Common myeloid progenitor, CD34-positive (primary cell): ENCODE measurements at regions of chr17 and their contacts with region 1.

Region 1: GRCh38 chr17:82559566-82560251 is 40.2 kb downstream of the FOXK2 start:
- DNase-seq: peak in 2 of 3 donors; percentile 32 to 33
- H3K4me3 ChIP-seq: no peak overlapping the region
- H3K27ac ChIP-seq: no peak overlapping the region
- H3K4me1 ChIP-seq: peaks cover 0 to 15% (median 10%) of the 10 kb centered on the region in 4 experiments
- H3K27me3 ChIP-seq: no peaks in the 10 kb centered on the region

Region 2: DNA sequence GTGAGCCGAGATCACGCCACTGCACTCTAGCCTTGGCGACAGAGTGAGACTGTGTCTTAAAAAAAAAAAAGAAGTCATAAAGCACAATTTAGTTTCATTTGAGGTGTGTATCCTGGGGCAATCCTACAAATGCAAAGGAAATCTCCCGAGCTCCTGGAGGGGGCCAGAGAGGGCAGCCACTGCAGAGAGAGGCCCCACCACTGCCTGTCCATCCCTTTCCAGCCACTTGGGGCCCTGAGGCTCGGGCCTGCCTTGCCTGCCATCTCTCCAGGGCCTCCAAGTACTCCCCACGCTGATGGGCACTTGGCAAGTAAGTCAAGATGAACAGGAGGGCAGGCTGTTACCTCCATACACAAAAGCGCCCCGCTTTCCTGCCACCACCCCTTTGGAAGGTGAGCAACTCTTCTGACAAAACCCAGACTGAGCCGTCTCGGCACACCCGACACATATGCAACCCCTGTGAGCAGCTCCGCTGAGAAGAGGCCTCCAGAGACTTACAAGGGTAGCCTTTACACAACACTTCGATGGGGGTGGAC is 307.7 kb before region 1 on chr17:
- CTCF ChIA-PET with region 1: no interaction called
- POLR2A ChIA-PET with region 1: interaction called, 12 read pairs
- DNase-seq: no peak
- H3K4me3 ChIP-seq: no peak overlapping the region
- H3K27ac ChIP-seq: no peak overlapping the region
- H3K4me1 ChIP-seq: peaks cover 0 to 14% (median 9%) of the 10 kb centered on the region in 4 experiments
- H3K27me3 ChIP-seq: no peaks in the 10 kb centered on the region

Region 3: DNA sequence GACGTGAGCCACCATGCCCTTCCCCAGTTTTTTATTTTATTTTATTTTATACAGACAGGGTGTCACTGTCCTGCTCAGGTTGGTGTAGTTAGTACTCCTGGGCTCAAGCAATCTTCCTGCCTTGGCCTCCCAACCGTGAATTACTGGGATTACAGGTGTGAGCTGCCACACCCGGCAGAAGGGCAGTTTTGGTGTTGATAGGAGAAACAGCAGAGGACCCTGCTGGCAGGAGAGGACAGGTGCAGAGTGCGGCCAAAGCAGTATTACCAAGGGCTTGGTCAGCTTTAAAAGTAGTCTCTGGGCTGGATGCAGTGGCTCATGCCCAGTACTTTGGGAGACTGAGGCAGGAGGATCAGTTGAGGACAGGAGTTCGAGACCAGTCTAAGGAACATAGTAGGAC is 17.3 kb before region 1 on chr17:
- CTCF ChIA-PET with region 1: no interaction called
- POLR2A ChIA-PET with region 1: no interaction called
- DNase-seq: no peak
- H3K4me3 ChIP-seq: no peak overlapping the region
- H3K27ac ChIP-seq: no peak overlapping the region
- H3K4me1 ChIP-seq: peaks cover 0 to 10% (median 5%) of the 10 kb centered on the region in 4 experiments
- H3K27me3 ChIP-seq: no peaks in the 10 kb centered on the region